Esophagus muscularis mucosa (tissue), 4 donors: ENCODE measurements at regions of chr4 and their contacts with region 1.

Region 1: DNA sequence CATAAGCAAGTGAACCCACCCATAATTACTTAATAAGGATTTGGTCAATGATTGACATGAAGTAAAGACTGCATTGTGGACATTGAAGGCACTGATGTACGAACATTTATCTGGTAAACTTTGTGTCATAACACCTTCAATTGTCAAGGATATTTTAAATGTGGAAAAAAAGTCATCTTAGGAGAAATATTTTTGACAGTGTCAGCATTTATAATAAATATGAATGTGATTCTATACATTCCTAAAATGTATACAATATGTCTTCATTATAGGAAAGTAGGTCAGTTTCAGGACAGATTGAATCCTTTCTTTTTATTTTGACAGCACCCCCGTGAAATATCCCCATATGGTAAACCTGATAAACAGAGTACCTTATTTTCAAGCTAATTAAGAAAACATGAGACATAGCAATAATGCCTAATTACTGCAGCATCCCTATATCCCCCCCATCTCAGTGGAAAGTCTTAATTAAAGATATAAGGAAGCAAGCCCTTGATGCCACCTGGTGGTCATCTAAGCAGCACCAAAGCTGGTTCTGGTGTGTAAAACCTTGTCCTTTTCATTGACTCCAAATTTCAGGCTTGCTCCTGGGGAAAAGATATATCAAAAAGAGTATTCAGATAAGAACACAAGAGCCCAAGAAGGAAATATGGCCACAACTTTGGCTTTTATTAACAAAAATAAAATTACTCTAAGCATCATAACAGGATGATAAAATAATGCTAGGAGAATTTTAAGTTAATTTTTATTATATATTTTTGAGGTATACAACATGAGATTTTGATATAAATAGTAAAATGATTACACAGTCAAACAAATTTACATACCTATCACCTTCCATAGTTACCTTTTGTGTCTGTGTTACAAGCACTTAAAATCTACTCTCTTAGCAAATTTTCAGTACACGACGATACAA is 379.7 kb downstream of the TLL1 start:
- DNase-seq: no peak
- H3K4me3 ChIP-seq: no peak overlapping the region
- H3K27ac ChIP-seq: no peak overlapping the region
- H3K4me1 ChIP-seq: no peaks in the 10 kb centered on the region
- H3K27me3 ChIP-seq: no peaks in the 10 kb centered on the region
- CTCF ChIP-seq: peak in 2 of 3 experiments; percentile 40 to 54
- EP300 ChIP-seq: no peak
- POLR2A ChIP-seq: no peak

Region 2: GRCh38 chr4:166012129-166013078 is 240.3 kb before region 1 on chr4:
- intact Hi-C with region 1: no loop called
- DNase-seq: no peak
- H3K4me3 ChIP-seq: no peak overlapping the region
- H3K27ac ChIP-seq: no peak overlapping the region
- H3K4me1 ChIP-seq: no peaks in the 10 kb centered on the region
- H3K27me3 ChIP-seq: no peaks in the 10 kb centered on the region
- CTCF ChIP-seq: no peak
- EP300 ChIP-seq: no peak
- POLR2A ChIP-seq: no peak

Region 3: GRCh38 chr4:166165829-166166420 is 86.8 kb before region 1 on chr4:
- intact Hi-C with region 1: loop called (anchors 5 kb)
- DNase-seq: no peak
- H3K4me3 ChIP-seq: no peak overlapping the region
- H3K27ac ChIP-seq: no peak overlapping the region
- H3K4me1 ChIP-seq: no peaks in the 10 kb centered on the region
- H3K27me3 ChIP-seq: no peaks in the 10 kb centered on the region
- CTCF ChIP-seq: peak; percentile 71 to 81 (median 73)
- EP300 ChIP-seq: no peak
- POLR2A ChIP-seq: no peak

Region 4: DNA sequence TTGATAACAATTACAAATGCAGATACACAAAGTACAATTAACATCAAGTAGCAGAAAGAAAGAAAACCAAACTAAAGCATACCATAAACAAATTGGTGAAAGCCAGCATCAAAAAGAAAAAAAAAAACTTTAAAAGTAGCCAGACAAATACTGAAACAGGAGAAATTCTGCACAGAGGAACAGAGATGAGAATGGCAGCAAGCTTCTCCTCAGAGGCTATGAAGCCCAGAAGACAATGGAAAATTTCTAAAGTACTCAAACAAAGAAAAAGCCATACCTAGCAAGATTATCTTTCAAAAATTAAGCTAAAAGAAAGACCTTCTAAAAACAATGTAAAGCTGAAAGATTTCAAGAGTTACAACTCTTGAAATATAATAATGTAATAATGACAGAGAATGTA is 510.3 kb after region 1 on chr4:
- intact Hi-C with region 1: no loop called
- DNase-seq: no peak
- H3K4me3 ChIP-seq: no peak overlapping the region
- H3K27ac ChIP-seq: no peak overlapping the region
- H3K4me1 ChIP-seq: no peaks in the 10 kb centered on the region
- H3K27me3 ChIP-seq: no peaks in the 10 kb centered on the region
- CTCF ChIP-seq: no peak
- EP300 ChIP-seq: no peak
- POLR2A ChIP-seq: no peak